A549 (cell line): ENCODE measurements at regions of chr10 and their contacts with region 1.

Region 1: GRCh38 chr10:35119378-35119777 is 7.3 kb upstream of the CREM start:
- DNase-seq: no peak
- ATAC-seq: no peak
- H3K4me3 ChIP-seq: no peak overlapping the region
- H3K27ac ChIP-seq: no peak overlapping the region
- H3K4me1 ChIP-seq: no peaks in the 10 kb centered on the region
- CTCF ChIP-seq: no peak
- EP300 ChIP-seq: no peak
- POLR2A ChIP-seq: no peak
- RAD21 ChIP-seq: no peak

Region 2: GRCh38 chr10:35103882-35104281 is 15.5 kb before region 1 on chr10:
- CTCF ChIA-PET with region 1: interaction called, 20 read pairs
- POLR2A ChIA-PET with region 1: no interaction called
- DNase-seq: no peak
- ATAC-seq: no peak
- H3K4me3 ChIP-seq: no peak overlapping the region
- H3K27ac ChIP-seq: no peak overlapping the region
- H3K4me1 ChIP-seq: no peaks in the 10 kb centered on the region
- CTCF ChIP-seq: no peak
- EP300 ChIP-seq: no peak
- POLR2A ChIP-seq: no peak
- RAD21 ChIP-seq: no peak

Region 3: GRCh38 chr10:35109141-35109540 is 10.2 kb before region 1 on chr10:
- CTCF ChIA-PET with region 1: interaction called, 20 read pairs
- POLR2A ChIA-PET with region 1: no interaction called
- DNase-seq: no peak
- ATAC-seq: no peak
- H3K4me3 ChIP-seq: no peak overlapping the region
- H3K27ac ChIP-seq: no peak overlapping the region
- H3K4me1 ChIP-seq: no peaks in the 10 kb centered on the region
- CTCF ChIP-seq: no peak
- EP300 ChIP-seq: no peak
- POLR2A ChIP-seq: no peak
- RAD21 ChIP-seq: no peak

Region 4: DNA sequence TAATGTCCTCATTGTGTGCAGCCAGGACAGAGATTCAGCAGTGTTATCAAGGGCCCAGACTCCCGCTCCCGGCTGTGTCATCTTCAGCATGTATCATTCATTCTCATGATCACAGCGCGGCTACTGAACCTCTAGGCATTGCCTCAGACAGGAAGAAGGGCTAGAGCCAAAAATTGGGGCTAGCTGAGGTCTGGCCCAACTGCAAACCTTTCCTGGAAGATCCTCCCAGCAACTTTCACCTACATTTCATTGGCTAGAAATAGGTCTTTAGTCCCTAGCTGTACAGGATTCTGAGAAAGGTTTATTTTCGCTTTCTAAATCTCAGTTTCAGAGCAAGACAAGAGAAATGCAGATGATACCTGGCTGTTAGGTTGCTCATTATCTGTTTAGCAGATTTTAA is 89.2 kb after region 1 on chr10:
- CTCF ChIA-PET with region 1: interaction called, 246 read pairs
- POLR2A ChIA-PET with region 1: no interaction called
- DNase-seq: no peak
- ATAC-seq: no peak
- H3K4me3 ChIP-seq: no peak overlapping the region
- H3K27ac ChIP-seq: no peak overlapping the region
- H3K4me1 ChIP-seq: 0 out of 3 replicates have a peak, but pooled peaks cover 3% of the 10 kb centered on the region
- CTCF ChIP-seq: no peak
- EP300 ChIP-seq: no peak
- POLR2A ChIP-seq: no peak
- RAD21 ChIP-seq: no peak

Region 5: GRCh38 chr10:35470260-35470918 is 351.0 kb after region 1 on chr10:
- CTCF ChIA-PET with region 1: no interaction called
- POLR2A ChIA-PET with region 1: no interaction called
- DNase-seq: no peak
- ATAC-seq: peak; percentile 46; a peak in 4 of 6 replicates
- H3K4me3 ChIP-seq: no peak overlapping the region
- H3K27ac ChIP-seq: no peak overlapping the region
- H3K4me1 ChIP-seq: no peaks in the 10 kb centered on the region
- CTCF ChIP-seq: no peak
- EP300 ChIP-seq: no peak
- POLR2A ChIP-seq: no peak
- RAD21 ChIP-seq: no peak